HEK293 (cell line): ENCODE measurements at regions of chr9 and their contacts with region 1.

Region 1: DNA sequence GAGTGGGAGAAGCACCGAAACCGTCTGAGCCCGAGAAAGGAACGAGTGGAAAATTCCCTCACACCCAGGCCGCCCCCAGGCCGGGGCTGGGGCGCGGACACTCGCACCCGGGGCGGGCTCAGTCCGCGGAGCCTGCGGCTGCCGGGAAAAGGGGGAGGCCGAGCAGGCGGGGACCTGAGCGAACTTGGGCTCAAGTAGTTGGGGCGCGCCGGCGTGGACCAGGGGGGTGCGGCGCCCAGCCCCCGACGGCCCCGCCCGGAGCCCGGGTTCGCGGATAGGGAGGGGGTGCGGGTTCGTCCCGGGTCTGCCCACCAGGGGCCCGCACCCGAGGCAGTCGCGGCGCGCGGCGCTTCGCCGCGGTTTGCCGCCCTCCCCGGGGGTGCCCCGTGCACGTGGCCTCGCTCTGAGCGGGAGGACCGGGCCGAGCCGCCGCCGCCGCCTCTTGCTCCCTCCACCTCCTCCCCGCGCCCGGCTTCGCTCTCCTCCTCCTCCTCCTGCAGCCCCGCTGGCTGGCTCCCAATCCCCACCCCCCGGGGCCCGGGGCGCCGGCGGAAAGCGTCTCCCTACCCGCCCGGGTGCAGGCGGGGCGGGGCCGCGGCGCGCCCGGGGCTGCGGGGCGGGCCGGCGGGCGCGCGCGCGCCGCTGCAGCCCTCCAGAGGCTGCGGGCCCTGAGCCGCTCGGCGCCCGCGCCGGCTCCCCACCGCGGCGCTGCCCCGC is 1.1 kb upstream of the NFIB start:
- H3K4me3 ChIP-seq: peak overlapping the region; percentile 98
- H3K27ac ChIP-seq: peak overlapping the region; percentile 100
- H3K4me1 ChIP-seq: peaks cover 28% of the 10 kb centered on the region
- CTCF ChIP-seq: no peak

Region 2: GRCh38 chr9:14192558-14192957 is 122.5 kb before region 1 on chr9:
- CTCF ChIA-PET with region 1: no interaction called
- POLR2A ChIA-PET with region 1: interaction called, 12 read pairs
- H3K4me3 ChIP-seq: no peak overlapping the region
- H3K27ac ChIP-seq: no peak overlapping the region
- H3K4me1 ChIP-seq: peaks cover 14% of the 10 kb centered on the region
- CTCF ChIP-seq: no peak